Activated CD4-positive, alpha-beta T cell treated with anti-CD3 and anti-CD28 coated beads, Interleukin-2, amount 10 ng/mL, durations not matched to agents 24 days and 14 days (primary cell): ENCODE measurements at regions of chr1 and their contacts with region 1.

Region 1: GRCh38 chr1:234499119-234499942 is 20.4 kb upstream of the TARBP1 start:
- DNase-seq: peak; percentile 96
- H3K4me3 Mint-ChIP-seq: peak overlapping the region; percentile 50
- H3K27ac Mint-ChIP-seq: peak overlapping the region; percentile 85
- H3K4me1 Mint-ChIP-seq: peaks cover 70% of the 10 kb centered on the region
- H3K27me3 Mint-ChIP-seq: no peaks in the 10 kb centered on the region

Region 2: GRCh38 chr1:234368320-234369032 is 130.9 kb before region 1 on chr1:
- intact Hi-C with region 1: no loop called
- DNase-seq: peak; percentile 61
- H3K4me3 Mint-ChIP-seq: peak overlapping the region; percentile 1
- H3K27ac Mint-ChIP-seq: peak overlapping the region; percentile 43
- H3K4me1 Mint-ChIP-seq: peaks cover 26% of the 10 kb centered on the region
- H3K27me3 Mint-ChIP-seq: peaks cover 2% of the 10 kb centered on the region

Region 3: DNA sequence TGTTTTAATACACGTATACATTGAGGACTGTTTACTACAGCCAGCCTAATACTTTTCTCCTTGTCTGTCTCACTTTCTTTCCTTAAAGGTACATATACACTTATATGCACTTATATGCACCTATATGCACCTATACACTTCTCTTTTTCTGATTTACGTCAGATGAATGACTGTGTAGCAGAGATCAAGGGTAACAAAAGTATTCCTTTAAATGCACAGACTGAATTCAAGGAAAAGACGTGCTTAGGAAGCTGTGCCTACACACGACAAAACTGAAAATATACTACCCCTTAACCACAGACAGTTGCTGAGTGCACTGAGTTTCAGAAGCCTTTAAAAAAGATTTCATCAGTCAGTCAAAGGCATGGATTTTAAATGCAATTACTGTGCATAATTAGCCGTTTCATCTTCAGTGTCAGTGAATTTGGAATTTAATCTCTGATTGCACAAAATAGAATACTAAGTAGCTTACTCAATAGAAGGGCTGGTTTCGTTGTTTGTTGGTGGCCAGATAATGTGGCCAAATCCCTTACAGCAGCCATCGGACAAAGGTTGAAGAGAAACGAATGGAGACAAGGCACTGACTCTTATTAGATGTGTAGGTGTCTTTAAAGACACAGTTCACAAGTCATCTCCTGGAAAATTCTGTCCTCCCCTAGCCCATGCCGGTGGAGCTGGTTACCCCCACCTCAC is 17.9 kb after region 1 on chr1:
- intact Hi-C with region 1: loop called (anchors 1 kb)
- DNase-seq: no peak
- H3K4me3 Mint-ChIP-seq: peak overlapping the region; percentile 27
- H3K27ac Mint-ChIP-seq: peak overlapping the region; percentile 48
- H3K4me1 Mint-ChIP-seq: peaks cover 34% of the 10 kb centered on the region
- H3K27me3 Mint-ChIP-seq: no peaks in the 10 kb centered on the region

Region 4: DNA sequence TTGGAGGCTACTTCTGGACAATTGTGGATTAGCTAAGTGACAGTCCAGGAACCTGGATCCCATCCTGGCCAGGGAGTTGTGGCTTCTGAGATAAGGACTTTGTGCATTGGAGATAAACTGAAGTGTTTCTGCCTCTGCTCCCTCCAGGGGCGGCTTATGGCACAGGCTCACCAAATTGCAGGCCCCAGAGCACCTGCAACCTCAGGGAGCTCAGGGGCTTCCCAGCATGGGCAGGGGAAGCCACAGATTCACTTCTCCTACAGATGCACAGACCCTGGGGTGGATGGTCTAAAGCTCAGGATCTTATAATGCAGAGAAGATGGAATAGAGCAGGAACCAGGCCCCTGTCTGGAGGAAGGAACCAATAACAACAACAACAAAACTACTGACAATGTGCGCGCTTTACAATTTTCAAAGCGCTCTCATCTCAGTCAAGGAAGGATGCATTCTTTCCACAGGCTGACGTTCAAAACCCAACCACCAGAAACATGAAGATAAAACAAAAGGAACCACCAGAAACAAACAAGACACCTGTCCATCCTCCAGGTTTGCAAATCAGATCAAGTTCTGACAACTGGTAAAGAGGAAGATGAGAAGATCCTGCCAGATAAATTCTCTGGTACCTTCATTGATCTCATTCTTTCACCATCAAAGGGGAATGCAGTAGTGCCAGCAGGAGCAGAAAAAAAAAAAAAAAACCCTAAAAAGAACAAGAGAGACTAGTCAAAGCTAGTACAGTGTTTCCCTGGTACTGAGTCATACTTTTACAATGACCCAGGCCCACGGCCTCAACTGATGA is 231.6 kb after region 1 on chr1:
- intact Hi-C with region 1: loop called (anchors 1 kb)
- DNase-seq: peak; percentile 86
- H3K4me3 Mint-ChIP-seq: peak overlapping the region; percentile 68
- H3K27ac Mint-ChIP-seq: peak overlapping the region; percentile 96
- H3K4me1 Mint-ChIP-seq: peaks cover 77% of the 10 kb centered on the region
- H3K27me3 Mint-ChIP-seq: no peaks in the 10 kb centered on the region

Region 5: GRCh38 chr1:234875953-234876855 is 376.9 kb after region 1 on chr1:
- intact Hi-C with region 1: loop called (anchors 2 kb)
- DNase-seq: no peak
- H3K4me3 Mint-ChIP-seq: peak overlapping the region; percentile 3
- H3K27ac Mint-ChIP-seq: peak overlapping the region; percentile 92
- H3K4me1 Mint-ChIP-seq: peaks cover 51% of the 10 kb centered on the region
- H3K27me3 Mint-ChIP-seq: no peaks in the 10 kb centered on the region

Region 6: DNA sequence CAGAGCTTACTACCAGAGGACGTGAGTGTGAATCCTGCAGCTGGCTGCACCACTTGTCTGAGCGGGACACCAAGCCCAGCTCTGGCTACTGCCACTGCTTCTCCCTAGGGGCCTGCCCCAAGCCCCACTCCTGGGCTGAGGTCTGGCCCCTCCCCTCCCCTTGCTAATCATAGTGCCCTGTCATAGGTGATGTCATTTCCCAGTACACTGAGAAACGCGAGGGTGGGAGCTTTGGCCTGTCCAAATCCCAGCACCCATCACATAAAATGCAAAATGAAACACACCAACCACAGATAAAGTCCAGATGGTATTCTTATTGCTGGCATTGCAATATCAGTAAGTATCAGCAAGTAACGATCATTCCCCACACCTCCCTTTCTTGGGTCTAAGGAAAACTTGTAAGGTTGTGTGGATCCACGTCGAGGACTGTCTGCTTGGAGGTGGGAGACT is 551.6 kb after region 1 on chr1:
- intact Hi-C with region 1: loop called (anchors 1 kb)
- DNase-seq: no peak
- H3K4me3 Mint-ChIP-seq: no peak overlapping the region
- H3K27ac Mint-ChIP-seq: peak overlapping the region; percentile 66
- H3K4me1 Mint-ChIP-seq: peaks cover 44% of the 10 kb centered on the region
- H3K27me3 Mint-ChIP-seq: no peaks in the 10 kb centered on the region